PC-3 (cell line): ENCODE measurements at regions of chr16 and their contacts with region 1.

Region 1: GRCh38 chr16:3400779-3401688 is at the starts of genes ZNF174 and ZSCAN32:
- DNase-seq: peak; percentile 97
- ATAC-seq: peak; percentile 97
- H3K4me3 ChIP-seq: peak within 1 kb of the TSS; percentile 99
- H3K27ac ChIP-seq: peak within 1 kb of the TSS; percentile 8; the same call in 1 of the 2 replicates
- H3K4me1 ChIP-seq: no peaks in the 10 kb centered on the region
- H3K27me3 ChIP-seq: no peaks in the 10 kb centered on the region
- CTCF ChIP-seq: no peak
- total RNA-seq, gene ZNF174: 9.5 and 11.3 TPM in 2 replicates
- total RNA-seq, gene ZSCAN32: 5.9 and 7.5 TPM in 2 replicates

Region 2: DNA sequence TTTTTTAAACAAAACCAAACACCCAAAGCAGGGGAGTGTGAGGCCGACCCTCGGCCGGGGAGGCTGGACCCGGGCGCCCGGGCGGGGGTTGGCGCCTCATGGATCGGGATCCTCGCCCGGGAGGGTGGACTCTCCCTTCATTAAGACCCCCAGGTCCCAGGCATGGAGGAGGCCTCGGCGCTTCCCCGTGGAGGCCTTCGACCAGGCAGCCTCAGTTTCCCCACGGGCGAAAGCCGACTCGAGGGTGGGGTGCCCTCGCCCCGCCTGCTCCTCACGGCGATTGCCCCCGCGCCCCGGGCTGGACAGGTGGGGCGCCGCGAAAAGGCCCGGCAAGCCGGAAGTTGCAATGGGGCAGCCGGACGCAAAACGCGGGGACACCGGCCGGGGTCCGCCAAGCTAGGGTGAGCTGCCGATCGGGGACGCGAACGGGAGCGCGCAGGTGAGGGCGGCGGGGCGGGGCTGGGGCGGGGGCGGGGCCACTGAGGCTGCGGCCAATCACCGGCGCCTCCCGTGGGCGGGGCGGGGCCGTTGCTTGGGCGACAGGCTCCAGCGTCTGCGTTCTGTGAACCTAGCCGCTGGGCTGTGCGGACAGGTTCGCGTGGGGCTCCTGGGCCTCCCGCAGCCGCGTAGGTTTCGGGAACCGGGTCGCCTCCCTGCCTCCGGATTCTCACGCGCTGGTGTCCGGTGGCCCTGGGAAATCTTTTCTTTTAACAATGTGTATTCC is 294.7 kb before region 1 on chr16:
- CTCF ChIA-PET with region 1: no interaction called
- POLR2A ChIA-PET with region 1: no interaction called
- intact Hi-C with region 1: no loop called
- DNase-seq: peak; percentile 81
- ATAC-seq: peak; percentile 97
- H3K4me3 ChIP-seq: peak overlapping the region; percentile 84
- H3K27ac ChIP-seq: no peak overlapping the region
- H3K4me1 ChIP-seq: peaks cover 3% of the 10 kb centered on the region; the same call in 1 of the 2 replicates
- H3K27me3 ChIP-seq: no peaks in the 10 kb centered on the region
- CTCF ChIP-seq: no peak

Region 3: DNA sequence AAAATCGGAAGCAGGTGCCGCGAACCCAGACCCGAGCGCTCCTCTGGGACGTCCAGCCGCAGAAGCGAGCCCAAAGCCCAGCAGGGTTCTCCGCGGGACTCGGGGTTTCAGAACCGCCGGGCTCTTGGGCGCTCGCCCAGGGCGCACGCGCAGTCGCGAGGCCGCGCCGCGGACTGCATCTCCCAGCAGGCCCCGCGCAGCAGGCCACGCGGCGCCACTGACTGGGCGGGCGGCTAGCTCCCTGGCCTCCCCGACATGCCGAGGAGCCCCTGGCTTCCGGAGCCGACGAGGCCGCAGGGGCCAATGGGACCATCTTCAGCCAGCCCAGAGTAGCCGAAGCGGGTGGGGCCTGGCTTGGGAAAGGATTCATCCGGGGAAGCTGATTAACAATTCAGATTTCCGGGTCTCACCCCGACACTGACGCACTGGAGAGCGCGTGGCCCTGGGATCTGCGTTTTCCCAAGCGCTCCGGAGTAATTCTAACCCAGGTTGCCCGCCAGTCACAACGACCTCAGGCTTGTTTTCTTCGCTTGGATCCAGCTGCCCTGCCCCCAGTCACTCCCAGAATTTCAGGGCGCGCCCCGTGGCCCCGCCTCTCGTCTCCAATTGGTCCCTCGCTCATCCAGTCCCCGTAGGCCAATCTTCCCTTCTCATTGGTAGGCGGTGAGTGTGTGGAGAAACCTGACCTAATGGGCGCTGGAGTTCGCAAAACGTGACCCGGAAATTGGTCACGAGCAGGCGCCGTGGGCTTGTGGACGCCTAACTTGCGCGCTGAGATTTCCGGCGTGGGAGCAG is 118.1 kb before region 1 on chr16 and contains the start of gene ZNF263:
- CTCF ChIA-PET with region 1: no interaction called
- POLR2A ChIA-PET with region 1: no interaction called
- intact Hi-C with region 1: loop called (anchors 1 kb)
- DNase-seq: peak; percentile 93
- ATAC-seq: peak; percentile 87
- H3K4me3 ChIP-seq: peak within 1 kb of the TSS; percentile 76
- H3K27ac ChIP-seq: peak within 1 kb of the TSS; percentile 98
- H3K4me1 ChIP-seq: peaks cover 6% of the 10 kb centered on the region
- H3K27me3 ChIP-seq: no peaks in the 10 kb centered on the region
- CTCF ChIP-seq: no peak
- total RNA-seq, gene ZNF263: 52.2 and 68.7 TPM in 2 replicates

Region 4: DNA sequence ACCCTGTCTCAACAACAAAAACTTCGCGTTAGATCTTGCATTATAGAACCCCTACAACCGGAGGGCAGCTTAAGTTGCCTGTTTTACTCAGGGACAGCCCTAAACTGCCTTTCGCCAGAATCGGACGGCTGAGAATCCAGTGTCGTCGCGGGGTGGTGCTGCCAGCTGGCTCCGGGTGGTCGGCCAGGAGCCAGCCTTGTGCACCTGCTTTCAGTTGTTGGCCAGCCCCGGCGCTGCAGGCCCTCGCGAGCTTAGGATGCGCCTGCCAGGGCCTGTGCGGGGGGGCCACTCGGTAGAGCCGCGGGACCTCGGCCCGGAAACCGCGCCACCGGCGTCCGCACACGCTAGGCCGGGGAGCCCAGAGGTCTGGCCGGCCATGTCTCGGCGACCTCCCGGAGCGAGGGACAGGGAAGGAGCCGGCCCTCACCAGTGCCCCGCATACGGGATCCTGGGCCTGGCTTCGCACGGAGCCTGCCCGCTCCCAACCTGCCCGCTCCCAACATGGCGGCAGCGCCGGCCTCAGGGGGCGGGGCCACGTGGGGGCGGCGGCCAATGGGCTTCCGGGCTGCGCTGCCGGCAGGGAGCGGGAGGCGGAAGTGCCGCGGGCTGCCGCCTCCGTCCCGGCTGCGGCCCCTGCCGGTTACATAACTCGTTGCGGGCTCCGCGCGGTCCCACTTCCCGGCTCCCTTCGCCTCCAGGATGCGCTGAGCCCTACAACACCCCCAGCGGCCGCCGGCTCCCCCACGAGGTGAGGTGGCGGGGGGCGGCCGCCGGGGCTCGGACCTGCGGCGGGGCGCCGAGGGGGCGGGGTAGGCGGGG is 56.6 kb after region 1 on chr16:
- CTCF ChIA-PET with region 1: no interaction called
- POLR2A ChIA-PET with region 1: no interaction called
- intact Hi-C with region 1: loop called (anchors 2 kb)
- DNase-seq: peak; percentile 81
- ATAC-seq: peak; percentile 78
- H3K4me3 ChIP-seq: peak overlapping the region; percentile 93
- H3K27ac ChIP-seq: peak overlapping the region; percentile 46
- H3K4me1 ChIP-seq: peaks cover 23% of the 10 kb centered on the region
- H3K27me3 ChIP-seq: no peaks in the 10 kb centered on the region
- CTCF ChIP-seq: peak; percentile 20; the same call in 1 of the 2 replicates